AG04449 (cell line): ENCODE measurements at regions of chr4 and their contacts with region 1.

Region 1: DNA sequence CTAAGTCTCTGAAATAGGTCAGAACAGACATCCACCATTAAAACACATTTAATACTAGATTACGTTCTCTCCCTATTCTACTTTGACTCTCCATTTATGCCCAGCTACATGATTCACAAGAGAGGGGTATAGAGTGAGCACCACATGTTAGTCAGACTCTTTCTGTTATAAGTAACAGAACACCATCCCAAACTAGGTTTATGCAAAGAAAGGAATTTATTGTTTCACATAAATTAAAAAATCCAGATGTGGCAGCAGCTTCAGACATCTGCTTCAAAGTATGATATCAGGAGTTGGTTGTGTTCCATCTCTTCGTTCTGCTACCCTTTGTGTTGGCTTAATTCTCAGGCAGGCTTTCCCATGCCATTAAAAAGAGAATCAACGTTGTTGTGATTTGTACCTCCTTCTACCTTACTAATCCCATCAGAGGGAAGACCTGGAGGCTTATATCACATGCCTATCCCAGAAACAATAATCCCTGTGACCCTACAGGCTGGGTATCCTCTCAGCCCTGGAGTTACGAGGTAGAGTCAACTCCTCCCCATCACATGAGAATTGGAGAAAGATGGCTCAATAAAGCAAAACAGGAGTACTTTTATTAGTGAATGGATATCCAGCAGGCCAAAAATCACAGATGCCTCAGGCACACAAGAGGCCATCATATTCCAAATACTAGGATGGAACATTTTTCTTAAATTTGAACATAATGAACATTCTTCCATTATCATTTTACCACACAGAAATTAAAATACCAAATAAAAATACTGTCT is 163.2 kb downstream of the SLC7A11 start:
- DNase-seq: no peak
- H3K4me3 ChIP-seq: no peak overlapping the region
- CTCF ChIP-seq: no peak

Region 2: GRCh38 chr4:136441629-136442282 is 1637.2 kb before region 1 on chr4:
- CTCF ChIA-PET with region 1: no interaction called
- POLR2A ChIA-PET with region 1: no interaction called
- DNase-seq: no peak
- H3K4me3 ChIP-seq: no peak overlapping the region
- CTCF ChIP-seq: no peak

Region 3: GRCh38 chr4:138062929-138063328 is 16.0 kb before region 1 on chr4:
- CTCF ChIA-PET with region 1: interaction called, 23 read pairs
- POLR2A ChIA-PET with region 1: no interaction called
- DNase-seq: no peak
- H3K4me3 ChIP-seq: no peak overlapping the region
- CTCF ChIP-seq: peak; percentile 26